ENCODE measurements at regions of chr10 and their contacts with region 1.

Region 1: DNA sequence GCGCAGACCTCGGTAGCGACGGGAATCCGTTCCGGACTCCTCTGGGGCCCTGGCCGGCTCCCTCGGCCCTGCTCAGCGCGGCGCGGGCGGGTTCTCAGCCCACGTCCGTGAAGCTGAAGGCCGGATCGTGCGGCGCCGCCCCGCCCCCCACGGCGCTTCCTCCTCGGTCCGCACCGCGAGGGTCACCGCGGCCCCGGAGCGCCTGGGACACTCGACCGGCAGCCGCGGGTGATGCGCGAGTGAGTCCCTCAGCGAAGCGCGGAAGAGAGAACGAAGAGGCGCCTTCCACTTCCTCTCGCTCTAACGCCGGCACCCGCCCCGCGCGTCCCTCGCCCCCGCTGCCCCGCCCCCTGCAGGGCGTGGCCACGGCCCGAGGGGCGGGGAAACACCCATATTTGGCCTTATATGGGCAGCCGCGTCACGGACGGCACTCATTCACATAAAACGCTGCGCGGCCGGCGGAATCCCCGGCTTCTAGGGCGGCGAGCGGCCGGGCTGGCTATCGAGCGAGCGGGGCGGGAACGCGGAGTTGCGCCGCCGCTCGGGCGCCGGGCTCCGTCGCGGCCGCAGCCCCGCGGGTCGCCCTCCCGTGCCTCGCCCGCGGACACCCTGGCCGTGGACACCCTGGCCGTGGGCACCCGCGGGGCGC is at the start of gene DUSP5:
- DNase-seq: peak; percentile 83 to 97
- H3K4me3 ChIP-seq: peak within 1 kb of the TSS; percentile 77
- H3K27ac ChIP-seq: peak within 1 kb of the TSS; percentile 89 to 93
- H3K4me1 ChIP-seq: peaks cover 0 to 22% of the 10 kb centered on the region in 2 donors
- H3K27me3 ChIP-seq: no peaks in the 10 kb centered on the region
- CTCF ChIP-seq: no peak
- total RNA-seq, gene DUSP5: 26.9 TPM

Region 2: GRCh38 chr10:109894516-109894915 is 603.0 kb before region 1 on chr10:
- intact Hi-C with region 1: loop called (anchors 5 kb)
- DNase-seq: peak; percentile 46 to 91
- H3K4me3 ChIP-seq: peak overlapping the region; percentile 6 to 18
- H3K27ac ChIP-seq: peak overlapping the region; percentile 82 to 94
- H3K4me1 ChIP-seq: peaks cover 19 to 94% of the 10 kb centered on the region in 2 donors
- H3K27me3 ChIP-seq: no peaks in the 10 kb centered on the region
- CTCF ChIP-seq: no peak

Region 3: GRCh38 chr10:110210674-110211464 is 286.7 kb before region 1 on chr10:
- intact Hi-C with region 1: loop called (anchors 2 kb)
- DNase-seq: peak; percentile 89 to 98
- H3K4me3 ChIP-seq: peak overlapping the region; percentile 74 to 93
- H3K27ac ChIP-seq: peak overlapping the region; percentile 97 to 99
- H3K4me1 ChIP-seq: peaks cover 3 to 34% of the 10 kb centered on the region in 2 donors
- H3K27me3 ChIP-seq: no peaks in the 10 kb centered on the region
- CTCF ChIP-seq: peak in 1 of 3 experiments; percentile 2

Region 4: DNA sequence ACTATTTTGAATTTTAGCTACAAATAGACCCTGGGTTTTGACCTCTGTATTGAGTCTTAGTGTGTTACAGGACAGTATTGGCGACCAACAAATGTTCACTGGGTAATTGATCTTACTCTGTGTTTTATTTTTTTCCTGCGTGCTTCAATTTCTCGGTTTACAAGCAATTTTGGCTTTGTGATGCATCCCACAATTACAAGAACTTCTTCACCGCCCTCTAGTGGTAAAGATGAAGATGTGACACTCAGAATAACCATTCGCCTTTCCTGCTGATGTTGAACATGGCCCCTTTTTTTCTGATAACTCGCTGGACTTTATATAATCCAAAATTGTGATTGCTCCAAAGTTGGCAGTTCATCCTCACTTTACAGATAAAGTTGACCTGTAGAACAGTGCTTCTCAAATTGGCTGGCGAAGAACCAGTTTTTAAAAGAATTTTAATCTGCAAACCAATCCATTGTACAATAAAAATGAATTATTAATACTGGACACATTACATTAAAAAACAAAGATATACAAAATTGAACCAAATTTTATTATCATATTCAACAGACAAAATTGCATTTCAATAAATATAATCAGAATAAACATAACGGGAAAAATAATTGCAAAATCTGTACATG is 49.7 kb after region 1 on chr10:
- intact Hi-C with region 1: loop called (anchors 5 kb)
- DNase-seq: no peak
- H3K4me3 ChIP-seq: no peak overlapping the region
- H3K27ac ChIP-seq: no peak overlapping the region
- H3K4me1 ChIP-seq: no peaks in the 10 kb centered on the region
- H3K27me3 ChIP-seq: no peaks in the 10 kb centered on the region
- CTCF ChIP-seq: peak; percentile 49 to 86 (median 82)

Region 5: DNA sequence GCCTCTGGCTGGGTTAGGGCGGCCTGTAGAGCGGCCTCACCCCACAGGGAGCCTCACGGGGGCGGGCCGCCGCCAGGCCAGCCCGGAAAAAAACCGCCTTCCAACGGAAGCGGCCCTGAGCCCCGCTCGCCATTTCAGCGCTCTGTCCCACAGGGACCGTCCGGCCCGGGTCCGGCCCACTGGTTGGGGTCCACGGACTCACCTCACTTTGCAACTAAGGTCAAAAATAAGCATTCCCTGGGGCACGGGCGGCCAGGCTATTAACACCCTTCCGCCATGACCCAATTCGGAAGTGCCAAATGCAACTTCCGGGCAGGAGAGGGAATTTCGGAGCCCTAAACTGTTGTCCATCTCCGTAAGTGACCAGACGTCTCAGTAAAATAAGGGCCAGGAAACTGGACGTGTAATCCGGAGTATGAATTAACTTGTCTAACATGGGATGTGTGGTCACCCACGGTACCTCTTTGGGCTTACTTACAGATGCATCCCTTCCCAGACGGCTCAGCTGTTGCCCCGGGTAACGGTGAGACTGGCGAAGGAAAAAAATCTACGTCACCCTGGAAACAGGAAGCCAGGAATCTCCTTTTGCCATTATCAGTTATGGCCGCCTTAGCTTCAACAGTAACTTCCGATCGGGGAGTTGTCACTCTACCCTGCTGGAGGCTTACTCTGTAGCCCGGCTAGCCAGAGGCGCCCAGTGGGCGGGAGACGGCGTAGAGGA is 421.2 kb after region 1 on chr10 and contains the start of gene BBIP1:
- intact Hi-C with region 1: loop called (anchors 10 kb)
- DNase-seq: no peak
- H3K4me3 ChIP-seq: peak within 1 kb of the TSS; percentile 78 to 98
- H3K27ac ChIP-seq: peak within 1 kb of the TSS; percentile 96 to 97
- H3K4me1 ChIP-seq: peaks cover 0 to 11% of the 10 kb centered on the region in 2 donors
- H3K27me3 ChIP-seq: no peaks in the 10 kb centered on the region
- CTCF ChIP-seq: no peak
- total RNA-seq, gene BBIP1: 1.5 TPM

Measured in ascending aorta (tissue), 2 donors.